PC-9 (cell line): ENCODE measurements at regions of chr13 and their contacts with region 1.

Region 1: GRCh38 chr13:99199541-99200431 is 868 bp upstream of the UBAC2 start:
- DNase-seq: no peak
- H3K4me3 ChIP-seq: peak overlapping the region; percentile 99
- H3K27ac ChIP-seq: peak overlapping the region; percentile 99
- H3K4me1 ChIP-seq: peaks cover 65% of the 10 kb centered on the region
- H3K27me3 ChIP-seq: no peaks in the 10 kb centered on the region
- CTCF ChIP-seq: no peak

Region 2: GRCh38 chr13:98584668-98585391 is 615.0 kb before region 1 on chr13:
- CTCF ChIA-PET with region 1: no interaction called
- POLR2A ChIA-PET with region 1: no interaction called
- intact Hi-C with region 1: no loop called
- DNase-seq: no peak
- H3K4me3 ChIP-seq: no peak overlapping the region
- H3K27ac ChIP-seq: no peak overlapping the region
- H3K4me1 ChIP-seq: peaks cover 41% of the 10 kb centered on the region
- H3K27me3 ChIP-seq: no peaks in the 10 kb centered on the region
- CTCF ChIP-seq: no peak

Region 3: DNA sequence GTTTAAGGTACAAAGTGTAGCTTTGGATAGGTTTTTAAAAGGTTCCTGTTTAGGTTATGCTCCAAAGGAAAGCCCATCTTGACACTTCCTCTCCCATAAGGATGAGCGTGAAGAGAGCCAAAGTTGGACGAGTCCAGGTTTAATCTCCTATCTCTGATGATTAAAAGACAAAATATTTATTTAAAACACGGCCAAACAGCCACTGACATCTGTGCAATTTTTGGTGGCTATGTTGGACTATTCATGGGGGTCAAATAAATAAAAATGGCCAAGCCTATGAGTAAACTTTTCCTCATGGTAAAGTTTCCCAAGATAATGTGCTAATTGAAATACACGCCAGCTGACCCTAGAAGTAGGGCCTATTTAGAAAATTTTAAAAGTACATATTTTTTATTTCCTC is 152.9 kb before region 1 on chr13:
- CTCF ChIA-PET with region 1: no interaction called
- POLR2A ChIA-PET with region 1: no interaction called
- intact Hi-C with region 1: loop called (anchors 2 kb)
- DNase-seq: no peak
- H3K4me3 ChIP-seq: peak overlapping the region; percentile 48
- H3K27ac ChIP-seq: peak overlapping the region; percentile 84
- H3K4me1 ChIP-seq: peaks cover 76% of the 10 kb centered on the region
- H3K27me3 ChIP-seq: no peaks in the 10 kb centered on the region
- CTCF ChIP-seq: no peak

Region 4: DNA sequence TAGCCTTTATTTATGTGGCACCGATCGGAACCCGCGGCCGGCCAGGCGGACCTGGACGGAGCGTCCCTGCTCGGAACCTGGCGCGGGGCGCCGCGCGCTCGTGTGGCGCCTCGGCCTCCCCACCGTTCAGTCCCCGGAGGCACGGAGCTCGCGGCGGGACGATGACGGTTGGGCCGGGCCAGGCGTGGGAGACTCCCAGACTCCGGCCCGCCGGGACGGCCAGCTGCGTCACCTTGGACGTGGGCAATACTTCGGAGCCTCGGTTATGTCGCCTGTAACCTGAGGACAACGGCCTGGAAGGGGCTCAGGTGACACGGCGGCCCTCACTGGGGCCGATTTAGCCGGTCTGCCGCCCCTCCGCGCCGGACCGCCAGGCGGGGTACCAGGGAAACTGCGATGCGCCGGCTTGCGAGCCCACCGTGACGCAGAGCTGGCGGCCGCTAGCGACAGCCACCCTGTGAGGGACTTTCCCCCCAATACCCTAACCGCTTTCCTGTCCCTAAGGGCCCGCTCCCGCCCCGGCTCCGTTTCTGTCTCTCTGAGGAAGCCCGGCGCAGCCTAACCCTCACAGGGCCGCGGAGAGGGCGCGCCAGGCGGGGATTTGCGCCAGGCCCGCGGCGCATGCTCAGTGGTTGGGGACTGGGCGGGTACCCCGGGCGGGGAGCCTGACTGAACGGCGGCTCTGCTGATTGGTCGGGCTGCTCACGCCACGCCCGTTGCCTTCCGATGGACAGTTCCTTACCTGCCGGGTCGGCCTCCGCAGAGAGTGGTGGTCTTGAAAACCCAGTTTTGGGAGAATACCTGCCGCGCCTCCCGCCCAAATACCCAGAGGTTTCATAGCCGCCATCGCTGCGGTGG is 112.5 kb before region 1 on chr13:
- CTCF ChIA-PET with region 1: no interaction called
- POLR2A ChIA-PET with region 1: no interaction called
- intact Hi-C with region 1: loop called (anchors 2 kb)
- DNase-seq: peak; percentile 85 to 92
- H3K4me3 ChIP-seq: peak overlapping the region; percentile 84
- H3K27ac ChIP-seq: peak overlapping the region; percentile 72
- H3K4me1 ChIP-seq: peaks cover 37% of the 10 kb centered on the region
- H3K27me3 ChIP-seq: no peaks in the 10 kb centered on the region
- CTCF ChIP-seq: no peak; the same call in 1 of the 2 replicates

Region 5: DNA sequence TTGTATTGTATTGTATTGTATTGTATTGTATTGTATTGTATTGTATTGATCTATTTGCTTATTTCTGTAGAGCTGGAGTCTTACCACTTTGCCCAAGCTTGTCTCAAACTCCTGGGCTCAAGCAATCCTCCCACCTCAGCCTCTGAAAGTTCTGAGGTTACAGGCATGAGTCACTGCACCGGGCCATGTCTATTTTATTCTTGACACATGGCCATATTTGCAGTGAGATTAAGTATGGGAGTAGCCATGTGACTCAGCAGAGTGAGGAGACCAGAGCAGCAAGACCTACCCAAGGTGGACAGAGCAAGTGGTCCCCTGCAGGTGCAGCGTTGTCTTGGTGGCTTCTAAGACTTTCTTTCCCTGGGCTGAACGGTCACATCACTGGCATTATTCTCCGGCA is 48.3 kb before region 1 on chr13:
- CTCF ChIA-PET with region 1: no interaction called
- POLR2A ChIA-PET with region 1: no interaction called
- intact Hi-C with region 1: loop called (anchors 1 kb)
- DNase-seq: peak; percentile 57 to 95
- H3K4me3 ChIP-seq: peak overlapping the region; percentile 26; the same call in 1 of the 2 replicates
- H3K27ac ChIP-seq: peak overlapping the region; percentile 90
- H3K4me1 ChIP-seq: peaks cover 57% of the 10 kb centered on the region
- H3K27me3 ChIP-seq: no peaks in the 10 kb centered on the region
- CTCF ChIP-seq: no peak

Region 6: DNA sequence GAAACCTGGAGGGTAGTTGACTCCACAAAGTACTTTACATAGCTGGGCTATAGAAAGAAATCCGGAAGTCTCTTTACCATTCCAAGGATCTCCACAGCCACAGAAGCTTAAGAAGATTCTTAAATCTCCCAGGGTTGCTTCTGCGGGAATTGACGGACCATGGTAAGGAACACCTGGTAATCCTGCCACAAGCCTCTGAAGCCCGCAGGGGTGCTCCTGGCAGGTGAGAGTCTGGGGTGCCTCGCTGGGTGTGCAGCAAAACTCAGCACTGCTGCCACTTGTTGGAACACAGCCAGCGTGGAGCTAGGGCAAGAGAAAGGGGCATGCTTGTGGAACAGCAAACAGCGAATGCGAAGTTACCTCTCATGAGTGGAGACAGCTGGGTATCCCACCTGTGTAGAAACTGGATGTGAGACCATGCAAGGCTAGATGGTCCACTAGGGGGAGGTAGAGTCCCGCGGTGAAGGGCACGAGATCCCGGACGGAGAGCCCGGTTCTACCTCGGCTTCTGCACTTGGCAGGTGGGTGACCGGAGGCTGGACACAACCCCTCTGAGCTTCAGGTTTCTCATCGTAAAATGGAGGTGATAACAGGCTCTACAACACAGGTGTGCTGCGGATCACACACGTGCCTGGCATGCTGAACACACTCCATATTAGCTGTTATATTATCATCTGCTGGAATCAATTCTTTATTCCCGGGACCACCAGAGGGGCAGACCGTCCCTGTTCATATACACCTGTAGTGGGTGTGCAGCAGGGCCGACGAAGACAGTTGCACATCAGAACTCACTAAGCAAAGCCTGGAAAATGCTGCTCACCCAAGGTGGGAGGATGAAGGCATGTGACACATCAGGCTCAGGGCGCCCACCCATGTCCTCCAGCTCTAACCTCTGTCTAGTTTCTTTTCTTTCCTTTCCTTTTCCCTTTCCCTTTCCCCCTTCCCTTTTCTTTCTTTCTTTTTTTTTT is 23.2 kb before region 1 on chr13:
- CTCF ChIA-PET with region 1: no interaction called
- POLR2A ChIA-PET with region 1: no interaction called
- intact Hi-C with region 1: loop called (anchors 2 kb)
- DNase-seq: peak; percentile 67 to 76
- H3K4me3 ChIP-seq: peak overlapping the region; percentile 47; the same call in 1 of the 2 replicates
- H3K27ac ChIP-seq: no peak overlapping the region
- H3K4me1 ChIP-seq: peaks cover 8% of the 10 kb centered on the region; the same call in 1 of the 2 replicates
- H3K27me3 ChIP-seq: no peaks in the 10 kb centered on the region
- CTCF ChIP-seq: peak; percentile 97

Region 7: DNA sequence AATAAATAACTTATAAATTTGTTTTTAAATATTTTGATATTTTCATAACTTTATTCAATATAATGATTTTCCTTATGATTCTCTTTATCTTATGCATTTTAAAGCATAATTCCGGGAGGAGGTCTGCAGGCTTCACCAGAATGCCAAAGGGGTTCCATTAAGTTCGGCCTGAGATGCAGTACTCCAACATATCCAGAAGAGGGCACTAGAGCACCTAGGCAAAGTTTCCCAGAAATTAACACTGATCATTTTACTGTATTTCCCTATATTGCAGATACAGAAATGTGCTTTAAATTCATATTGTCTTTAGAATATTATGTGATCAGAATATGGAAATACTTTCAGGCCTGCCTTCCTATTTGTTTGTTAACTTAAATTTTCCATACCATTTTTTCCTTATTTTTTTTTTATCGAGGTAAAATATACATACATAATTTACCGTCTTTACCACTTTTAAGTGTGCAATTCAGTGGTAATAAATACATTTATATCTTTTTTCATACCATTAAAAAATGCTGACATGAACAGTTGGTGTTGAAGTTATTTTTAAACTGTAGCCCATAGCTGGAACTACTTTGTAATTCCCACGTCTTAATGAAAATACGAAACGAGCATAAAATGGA is 242.6 kb after region 1 on chr13:
- CTCF ChIA-PET with region 1: no interaction called
- POLR2A ChIA-PET with region 1: no interaction called
- intact Hi-C with region 1: no loop called
- DNase-seq: peak; percentile 42 to 49
- H3K4me3 ChIP-seq: no peak overlapping the region
- H3K27ac ChIP-seq: no peak overlapping the region
- H3K4me1 ChIP-seq: peaks cover 19% of the 10 kb centered on the region
- H3K27me3 ChIP-seq: no peaks in the 10 kb centered on the region
- CTCF ChIP-seq: peak; percentile 96

Region 8: DNA sequence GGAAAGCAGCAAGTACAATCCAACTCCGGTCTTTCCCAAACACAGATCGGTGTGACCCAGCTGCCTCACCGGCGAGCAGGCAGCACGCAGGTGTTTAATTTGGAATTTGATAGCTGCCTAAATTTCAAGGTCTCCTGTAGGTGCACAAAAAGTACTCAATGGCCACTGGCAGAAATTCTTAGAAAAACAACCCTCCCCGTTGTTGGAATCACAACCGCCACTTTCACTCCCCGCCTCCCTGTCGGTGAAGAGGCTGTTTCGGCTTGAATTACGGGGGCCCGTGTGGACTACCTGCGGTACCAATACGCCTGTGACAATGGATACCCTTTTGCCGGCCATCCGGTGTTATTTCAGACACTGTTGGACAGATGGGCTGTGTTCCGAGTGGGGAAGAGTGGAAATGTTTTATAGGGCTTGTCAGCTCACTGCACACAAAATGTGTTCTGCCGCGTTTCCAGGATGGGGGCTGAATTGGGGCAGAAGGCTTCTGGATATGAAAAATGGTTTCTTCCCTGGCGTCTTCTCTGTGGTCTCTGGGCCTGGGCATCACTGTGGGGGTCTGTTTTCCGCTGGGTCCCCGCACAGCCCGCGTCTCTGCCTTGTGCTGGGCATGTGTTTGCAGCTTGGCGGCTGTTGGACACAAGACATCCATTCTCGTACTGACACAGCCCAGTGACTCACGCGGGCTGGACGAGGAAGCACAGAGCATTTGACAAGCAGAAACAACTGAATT is 726.4 kb after region 1 on chr13:
- CTCF ChIA-PET with region 1: no interaction called
- POLR2A ChIA-PET with region 1: interaction called, 11 read pairs
- intact Hi-C with region 1: no loop called
- DNase-seq: peak; percentile 42 to 48
- H3K4me3 ChIP-seq: peak overlapping the region; percentile 38
- H3K27ac ChIP-seq: no peak overlapping the region
- H3K4me1 ChIP-seq: 0 out of 2 replicates have a peak, but pooled peaks cover 10% of the 10 kb centered on the region
- H3K27me3 ChIP-seq: 0 out of 2 replicates have a peak, but pooled peaks cover 4% of the 10 kb centered on the region
- CTCF ChIP-seq: no peak